Astrocyte of the cerebellum (primary cell): ENCODE measurements at regions of chr3 and their contacts with region 1.

Region 1: GRCh38 chr3:130619196-130619595 is 102.2 kb downstream of the COL6A6 start:
- DNase-seq: no peak
- H3K4me3 ChIP-seq: no peak overlapping the region
- CTCF ChIP-seq: no peak

Region 2: GRCh38 chr3:130557336-130558035 is 61.7 kb before region 1 on chr3:
- in situ Hi-C with region 1: no loop called
- DNase-seq: no peak
- H3K4me3 ChIP-seq: no peak overlapping the region
- CTCF ChIP-seq: no peak

Region 3: GRCh38 chr3:130576375-130577266 is 42.6 kb before region 1 on chr3:
- in situ Hi-C with region 1: loop called (anchors 5 kb)
- DNase-seq: peak; percentile 61
- H3K4me3 ChIP-seq: no peak overlapping the region
- CTCF ChIP-seq: no peak

Region 4: DNA sequence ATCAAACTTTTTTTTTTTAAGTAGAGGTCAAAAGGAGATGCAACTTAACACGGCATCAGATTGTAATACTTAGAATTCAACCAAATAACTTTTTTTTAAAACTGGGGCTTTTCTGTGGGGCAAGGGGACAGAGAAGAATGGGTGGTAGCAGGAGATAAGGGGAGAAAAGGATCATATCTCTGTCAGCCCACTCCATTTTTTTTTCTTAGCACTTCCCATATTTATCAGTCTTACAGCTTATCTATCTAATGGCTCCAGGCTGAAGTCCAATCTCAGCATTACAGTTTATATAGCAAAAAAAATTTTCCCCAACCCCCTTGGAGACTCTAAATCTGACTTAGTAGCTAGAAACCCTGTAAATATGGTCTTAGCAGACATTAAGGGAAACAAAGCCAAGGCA is 58.1 kb after region 1 on chr3:
- in situ Hi-C with region 1: no loop called
- DNase-seq: no peak
- H3K4me3 ChIP-seq: no peak overlapping the region
- CTCF ChIP-seq: no peak

Region 5: GRCh38 chr3:130699765-130700164 is 80.6 kb after region 1 on chr3:
- in situ Hi-C with region 1: no loop called
- DNase-seq: no peak
- H3K4me3 ChIP-seq: no peak overlapping the region
- CTCF ChIP-seq: peak; percentile 12